B cell (primary cell): ENCODE measurements at regions of chr14 and their contacts with region 1.

Region 1: GRCh38 chr14:104752735-104753531 is at the start of gene SIVA1:
- DNase-seq: peak; percentile 100
- ATAC-seq: peak; percentile 88
- H3K4me3 ChIP-seq: peak within 1 kb of the TSS; percentile 38 to 98 (median 91)
- H3K4me3 Mint-ChIP-seq: peak within 1 kb of the TSS; percentile 91
- H3K27ac ChIP-seq: peak within 1 kb of the TSS; percentile 80 to 90
- H3K27ac Mint-ChIP-seq: peak within 1 kb of the TSS; percentile 95
- H3K4me1 ChIP-seq: peaks cover 18 to 24% of the 10 kb centered on the region in 2 donors
- H3K4me1 Mint-ChIP-seq: peaks cover 33% of the 10 kb centered on the region
- H3K27me3 ChIP-seq: no peaks in the 10 kb centered on the region
- H3K27me3 Mint-ChIP-seq: no peaks in the 10 kb centered on the region
- CTCF ChIP-seq: no peak
- total RNA-seq, gene SIVA1: 50.7 and 52.5 TPM in 2 replicates

Region 2: DNA sequence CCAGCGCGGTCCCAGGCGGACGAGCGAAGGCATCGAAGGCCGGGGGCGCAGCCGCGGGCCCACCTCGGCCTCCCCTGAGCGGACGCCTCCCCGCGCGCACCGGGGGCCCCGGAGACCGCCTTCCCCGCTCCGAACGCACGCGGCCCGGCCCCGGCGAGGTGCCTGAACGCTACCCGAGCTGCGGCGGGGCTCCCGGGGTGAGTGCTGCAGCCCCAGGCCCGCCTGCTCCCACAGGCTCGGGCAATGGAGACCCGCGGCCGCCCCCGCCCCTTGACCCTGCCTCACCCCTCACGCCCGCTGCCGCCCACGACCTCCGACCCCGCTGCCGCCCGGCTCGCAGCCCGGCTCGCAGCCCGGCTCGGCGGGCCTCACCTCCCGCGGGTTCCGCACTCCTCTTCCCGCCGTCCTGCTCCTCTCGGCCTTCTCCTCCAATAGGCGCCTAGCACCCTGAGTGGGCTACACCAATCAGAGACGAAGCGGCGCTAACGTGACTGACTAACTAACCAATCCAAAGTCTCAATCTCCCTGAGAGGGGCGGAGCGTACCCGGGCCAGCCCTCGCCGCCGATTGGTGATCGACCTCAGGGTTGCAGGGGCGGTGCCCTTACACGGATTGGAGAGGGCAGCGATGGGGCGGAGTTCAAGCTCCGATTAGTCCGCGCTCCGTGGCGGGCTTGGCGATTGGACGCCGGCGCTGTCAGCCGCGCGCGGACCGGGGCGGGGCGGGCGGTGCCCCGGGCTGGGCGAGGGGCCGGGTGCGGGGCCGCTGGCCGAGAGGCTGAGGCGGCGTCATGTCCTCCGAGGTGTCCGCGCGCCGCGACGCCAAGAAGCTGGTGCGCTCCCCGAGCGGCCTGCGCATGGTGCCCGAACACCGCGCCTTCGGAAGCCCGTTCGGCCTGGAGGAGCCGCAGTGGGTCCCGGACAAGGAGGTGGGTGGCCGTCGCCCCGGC is 1037.6 kb before region 1 on chr14 and contains the starts of genes XRCC3 and ZFYVE21:
- CTCF ChIA-PET with region 1: no interaction called
- POLR2A ChIA-PET with region 1: no interaction called
- intact Hi-C with region 1: loop called (anchors 5 kb)
- DNase-seq: peak; percentile 100
- ATAC-seq: peak; percentile 95
- H3K4me3 ChIP-seq: peak within 1 kb of the TSS; percentile 12 to 82 (median 60)
- H3K4me3 Mint-ChIP-seq: peak within 1 kb of the TSS; percentile 91
- H3K27ac ChIP-seq: peak within 1 kb of the TSS in 1 of 2 donors; percentile 55
- H3K27ac Mint-ChIP-seq: peak within 1 kb of the TSS; percentile 85
- H3K4me1 ChIP-seq: peaks cover 15 to 24% of the 10 kb centered on the region in 2 donors
- H3K4me1 Mint-ChIP-seq: peaks cover 36% of the 10 kb centered on the region
- H3K27me3 ChIP-seq: no peaks in the 10 kb centered on the region
- H3K27me3 Mint-ChIP-seq: no peaks in the 10 kb centered on the region
- CTCF ChIP-seq: no peak
- total RNA-seq, gene XRCC3: 18.0 and 18.6 TPM in 2 replicates
- total RNA-seq, gene ZFYVE21: 18.6 and 24.3 TPM in 2 replicates

Region 3: DNA sequence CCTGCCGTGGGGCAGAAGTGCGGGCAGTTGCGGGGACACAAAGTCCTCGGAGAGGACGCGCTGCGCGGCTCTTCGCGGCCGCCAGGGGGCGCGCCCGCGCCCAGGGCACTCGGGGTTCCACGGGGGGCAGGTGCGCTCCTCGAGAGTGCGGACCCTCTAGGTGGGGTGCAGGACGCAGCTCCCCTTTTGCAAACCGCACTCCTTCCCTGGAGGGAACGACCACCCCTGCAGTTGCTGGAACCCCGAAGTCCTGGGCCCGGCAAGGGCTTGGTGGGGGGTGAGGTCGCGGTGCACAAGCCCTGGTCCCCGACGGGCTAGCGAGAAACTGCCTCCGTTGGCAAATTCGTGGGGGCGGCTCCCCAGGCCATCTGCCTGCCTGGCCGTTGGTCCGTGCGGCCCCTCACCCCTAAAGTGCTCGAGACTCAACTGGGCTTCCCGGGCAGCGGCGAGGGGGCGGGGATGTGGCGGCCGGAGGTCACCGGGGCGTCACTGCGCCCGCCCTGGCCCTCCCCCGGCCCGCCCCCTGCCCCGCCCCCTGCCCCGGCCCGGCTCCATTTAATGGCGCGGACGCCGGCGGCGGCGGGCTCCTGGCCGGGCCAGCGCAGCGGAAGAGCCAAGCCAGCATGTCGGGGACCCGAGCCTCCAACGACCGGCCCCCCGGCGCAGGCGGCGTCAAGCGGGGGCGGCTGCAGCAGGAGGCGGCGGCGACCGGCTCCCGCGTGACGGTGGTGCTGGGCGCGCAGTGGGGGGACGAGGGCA is 29.1 kb before region 1 on chr14 and contains the start of gene ADSS1:
- CTCF ChIA-PET with region 1: interaction called, 12 read pairs
- POLR2A ChIA-PET with region 1: interaction called, 6 read pairs
- intact Hi-C with region 1: loop called (anchors 1 kb)
- DNase-seq: peak; percentile 85
- ATAC-seq: peak; percentile 84
- H3K4me3 ChIP-seq: peak within 1 kb of the TSS; percentile 53 to 79 (median 60)
- H3K4me3 Mint-ChIP-seq: peak within 1 kb of the TSS; percentile 76
- H3K27ac ChIP-seq: no peak within 1 kb of the TSS
- H3K27ac Mint-ChIP-seq: no peak within 1 kb of the TSS
- H3K4me1 ChIP-seq: peaks cover 6 to 10% of the 10 kb centered on the region in 2 donors
- H3K4me1 Mint-ChIP-seq: peaks cover 3% of the 10 kb centered on the region
- H3K27me3 ChIP-seq: peaks cover 0 to 9% (median 3%) of the 10 kb centered on the region in 4 experiments
- H3K27me3 Mint-ChIP-seq: peaks cover 8% of the 10 kb centered on the region
- CTCF ChIP-seq: peak; percentile 99
- total RNA-seq, gene ADSS1: 1.00 and 1.7 TPM in 2 replicates

Region 4: DNA sequence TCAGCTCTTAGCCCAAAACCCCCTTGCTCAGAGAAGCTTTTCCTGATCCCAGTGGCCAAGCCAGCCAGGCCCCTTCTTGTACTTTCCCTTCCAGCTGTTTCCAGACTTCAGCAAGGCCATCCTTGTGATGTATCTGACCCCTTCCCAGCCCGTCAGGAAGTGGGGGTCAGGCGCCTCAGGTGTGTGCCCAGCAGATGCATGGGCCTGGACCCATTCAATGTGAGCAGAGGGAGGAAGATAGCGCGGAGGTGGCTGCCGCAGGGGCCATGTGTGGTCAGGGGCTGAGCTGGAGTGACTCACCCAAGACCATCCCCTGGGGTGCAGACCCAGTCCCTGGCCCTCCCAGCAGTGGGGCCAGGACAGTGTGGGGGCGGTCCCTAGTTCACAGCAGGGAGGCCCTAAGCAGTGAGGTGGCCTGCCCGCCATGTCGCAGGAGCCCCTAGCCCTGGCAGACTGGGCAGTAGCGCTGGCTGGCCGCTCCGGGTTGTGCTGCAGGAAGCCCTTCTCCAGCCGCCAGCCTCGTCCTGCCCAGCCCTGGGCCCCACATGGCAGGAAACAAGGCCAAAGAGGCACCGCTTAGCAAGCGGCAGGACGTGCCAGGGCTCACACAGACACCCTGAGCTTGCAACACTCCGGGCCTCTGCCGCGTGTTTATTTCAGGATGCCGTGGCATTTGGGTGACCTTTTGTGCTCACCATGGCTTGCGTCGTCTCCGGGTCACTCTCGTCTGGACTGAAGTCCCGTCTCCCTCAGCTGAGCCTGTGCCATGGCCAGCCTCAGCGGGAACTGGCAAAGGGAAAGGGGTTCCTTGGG is 16.9 kb before region 1 on chr14:
- CTCF ChIA-PET with region 1: no interaction called
- POLR2A ChIA-PET with region 1: no interaction called
- intact Hi-C with region 1: no loop called
- DNase-seq: no peak
- ATAC-seq: no peak
- H3K4me3 ChIP-seq: no peak overlapping the region
- H3K4me3 Mint-ChIP-seq: no peak overlapping the region
- H3K27ac ChIP-seq: no peak overlapping the region
- H3K27ac Mint-ChIP-seq: no peak overlapping the region
- H3K4me1 ChIP-seq: no peaks in the 10 kb centered on the region
- H3K4me1 Mint-ChIP-seq: no peaks in the 10 kb centered on the region
- H3K27me3 ChIP-seq: peaks cover 0 to 5% (median 1%) of the 10 kb centered on the region in 4 experiments
- H3K27me3 Mint-ChIP-seq: no peaks in the 10 kb centered on the region
- CTCF ChIP-seq: no peak

Region 5: DNA sequence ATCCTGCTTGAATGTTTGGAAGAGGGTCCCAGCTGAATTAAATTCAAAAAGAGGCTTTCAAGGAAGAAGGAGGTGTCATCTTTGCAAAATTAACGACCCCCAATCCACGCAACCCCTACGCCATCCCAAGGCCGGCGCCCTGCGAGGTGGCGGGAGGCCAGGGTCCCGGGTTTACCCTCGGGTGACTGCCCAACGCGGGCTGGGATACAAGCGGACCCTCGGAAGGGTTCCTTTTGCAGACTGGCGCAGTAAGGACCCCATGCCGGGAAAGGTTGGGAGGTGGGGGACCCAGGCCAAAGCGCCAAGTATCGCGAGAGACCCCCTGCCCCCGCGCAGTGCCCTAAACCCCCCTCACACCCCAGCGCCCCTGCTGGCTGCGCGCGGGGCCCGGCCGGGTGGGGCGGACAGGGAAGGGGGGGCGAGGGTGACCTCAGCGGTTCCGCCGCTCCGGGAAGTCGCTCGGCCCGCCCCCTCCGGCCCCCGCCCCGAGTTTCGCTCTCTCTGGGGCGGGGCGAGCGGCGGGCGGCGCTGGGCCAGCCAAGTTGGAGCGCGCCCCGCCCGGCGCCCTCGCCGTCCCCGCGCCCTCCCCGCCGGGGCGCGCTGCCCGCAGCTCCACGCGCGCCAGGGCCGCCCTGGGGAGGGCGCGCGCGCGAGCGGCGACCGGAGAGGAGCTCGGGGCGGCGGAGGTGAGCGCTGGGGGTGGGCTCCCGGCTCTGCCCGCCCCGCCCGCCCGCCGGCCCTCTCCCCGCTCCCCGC is 47.3 kb after region 1 on chr14:
- CTCF ChIA-PET with region 1: no interaction called
- POLR2A ChIA-PET with region 1: interaction called, 5 read pairs
- intact Hi-C with region 1: loop called (anchors 1 kb)
- DNase-seq: peak; percentile 91
- ATAC-seq: peak; percentile 76
- H3K4me3 ChIP-seq: peak overlapping the region in 4 of 5 experiments; percentile 49 to 85 (median 76)
- H3K4me3 Mint-ChIP-seq: peak overlapping the region; percentile 81
- H3K27ac ChIP-seq: peak overlapping the region; percentile 72 to 88
- H3K27ac Mint-ChIP-seq: peak overlapping the region; percentile 80
- H3K4me1 ChIP-seq: peaks cover 19 to 54% of the 10 kb centered on the region in 2 donors
- H3K4me1 Mint-ChIP-seq: peaks cover 44% of the 10 kb centered on the region
- H3K27me3 ChIP-seq: no peaks in the 10 kb centered on the region
- H3K27me3 Mint-ChIP-seq: no peaks in the 10 kb centered on the region
- CTCF ChIP-seq: peak; percentile 40

Region 6: GRCh38 chr14:104993808-104994591 is 241.1 kb after region 1 on chr14:
- CTCF ChIA-PET with region 1: no interaction called
- POLR2A ChIA-PET with region 1: no interaction called
- intact Hi-C with region 1: no loop called
- DNase-seq: no peak
- ATAC-seq: no peak
- H3K4me3 ChIP-seq: no peak overlapping the region
- H3K4me3 Mint-ChIP-seq: no peak overlapping the region
- H3K27ac ChIP-seq: no peak overlapping the region
- H3K27ac Mint-ChIP-seq: no peak overlapping the region
- H3K4me1 ChIP-seq: no peaks in the 10 kb centered on the region
- H3K4me1 Mint-ChIP-seq: no peaks in the 10 kb centered on the region
- H3K27me3 ChIP-seq: no peaks in the 10 kb centered on the region
- H3K27me3 Mint-ChIP-seq: no peaks in the 10 kb centered on the region
- CTCF ChIP-seq: no peak

Region 7: DNA sequence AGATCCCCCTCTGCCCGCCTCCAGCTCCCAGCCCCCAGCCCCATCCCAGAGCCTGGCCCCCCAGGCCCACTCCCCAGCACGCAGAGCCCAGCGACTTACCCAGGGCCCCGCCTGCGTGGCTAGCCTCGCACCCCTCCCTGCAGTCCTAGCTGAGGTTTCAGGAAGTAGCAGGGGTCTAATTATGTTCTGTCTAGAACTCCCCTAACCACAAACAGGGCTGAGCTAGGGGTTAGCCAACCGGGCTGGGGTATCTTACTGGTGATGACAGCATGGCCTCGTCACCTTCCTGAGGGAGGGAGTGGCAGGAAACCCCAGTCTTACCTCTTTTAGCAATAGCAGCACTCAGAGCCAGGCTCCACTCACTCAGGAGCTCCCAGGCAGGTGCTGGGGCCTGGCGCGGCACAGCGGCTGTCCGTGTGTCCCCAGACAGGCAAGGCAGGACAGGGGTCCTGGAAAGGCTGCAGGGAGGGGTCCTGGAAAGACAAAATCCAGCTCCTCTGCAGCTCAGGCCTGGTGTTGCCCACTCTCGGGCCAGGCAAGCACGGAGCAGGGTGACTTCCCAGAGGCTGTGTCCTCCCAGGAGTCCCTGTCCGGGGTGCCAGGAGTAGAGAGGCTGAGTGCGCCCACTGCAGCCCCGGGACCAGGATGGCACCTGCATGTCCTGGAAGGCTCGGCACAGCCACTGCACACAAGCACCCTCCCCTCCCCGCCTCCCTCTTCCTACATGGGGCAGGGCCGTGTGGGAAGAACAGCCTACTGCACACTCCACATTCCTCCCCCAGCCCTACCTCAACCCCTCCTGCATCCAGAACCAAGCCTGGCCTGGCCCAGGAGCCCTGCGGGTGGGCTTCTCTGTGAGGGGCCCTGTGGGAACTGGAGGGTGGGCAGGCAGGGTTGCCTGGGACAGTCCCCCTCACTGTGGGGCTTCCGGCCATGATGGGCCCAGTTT is 312.6 kb after region 1 on chr14 and contains the start of gene GPR132:
- CTCF ChIA-PET with region 1: no interaction called
- POLR2A ChIA-PET with region 1: interaction called, 3 read pairs
- intact Hi-C with region 1: loop called (anchors 5 kb)
- DNase-seq: peak; percentile 96
- ATAC-seq: peak; percentile 78
- H3K4me3 ChIP-seq: peak within 1 kb of the TSS; percentile 81 to 100 (median 91)
- H3K4me3 Mint-ChIP-seq: peak within 1 kb of the TSS; percentile 87
- H3K27ac ChIP-seq: peak within 1 kb of the TSS; percentile 93 to 98
- H3K27ac Mint-ChIP-seq: peak within 1 kb of the TSS; percentile 98
- H3K4me1 ChIP-seq: peaks cover 79 to 95% of the 10 kb centered on the region in 2 donors
- H3K4me1 Mint-ChIP-seq: peaks cover 82% of the 10 kb centered on the region
- H3K27me3 ChIP-seq: no peaks in the 10 kb centered on the region
- H3K27me3 Mint-ChIP-seq: no peaks in the 10 kb centered on the region
- CTCF ChIP-seq: no peak
- total RNA-seq, gene GPR132: 54.5 and 63.2 TPM in 2 replicates